Activated naive CD4-positive, alpha-beta T cell treated with anti-CD3 and anti-CD28 coated beads for 36 hours (primary cell): ENCODE measurements at regions of chr1 and their contacts with region 1.

Region 1: DNA sequence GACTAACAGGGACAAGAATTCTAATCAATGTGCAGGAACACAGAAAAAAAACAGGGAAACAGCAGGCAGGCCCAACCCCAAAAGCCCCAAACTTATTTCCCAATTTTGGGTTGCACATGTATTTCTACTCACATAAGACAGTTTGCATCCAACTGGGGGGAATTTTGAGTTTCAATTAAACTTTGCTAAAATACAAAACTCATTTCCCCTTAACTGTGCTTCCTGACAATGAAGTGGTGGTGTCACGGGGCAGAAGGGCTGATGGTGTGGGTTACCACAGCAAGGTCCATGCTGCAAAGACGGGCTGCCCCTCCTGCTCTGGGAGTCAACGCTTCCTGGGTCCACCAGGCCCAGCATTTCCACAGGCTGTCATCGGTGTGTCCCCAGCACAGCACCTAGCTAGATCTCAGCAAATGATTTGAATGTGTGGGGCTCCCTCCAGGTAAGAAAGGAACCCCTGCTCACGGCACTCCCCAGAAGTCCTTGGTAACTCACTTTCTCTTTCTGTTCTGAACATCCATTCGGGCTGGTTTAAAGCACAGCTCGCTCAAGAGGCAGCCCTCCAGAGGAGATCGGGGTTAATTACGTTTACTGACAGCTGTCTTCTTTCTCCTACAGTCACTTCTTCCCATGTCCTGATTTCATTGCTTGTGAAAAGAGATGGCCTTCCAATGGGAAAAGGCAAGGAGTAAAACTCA is 27.4 kb downstream of the HIVEP3 start:
- DNase-seq: peak; percentile 71
- H3K4me3 Mint-ChIP-seq: peak overlapping the region; percentile 69
- H3K27ac Mint-ChIP-seq: peak overlapping the region; percentile 68
- H3K4me1 Mint-ChIP-seq: peaks cover 45% of the 10 kb centered on the region
- H3K27me3 Mint-ChIP-seq: no peaks in the 10 kb centered on the region

Region 2: DNA sequence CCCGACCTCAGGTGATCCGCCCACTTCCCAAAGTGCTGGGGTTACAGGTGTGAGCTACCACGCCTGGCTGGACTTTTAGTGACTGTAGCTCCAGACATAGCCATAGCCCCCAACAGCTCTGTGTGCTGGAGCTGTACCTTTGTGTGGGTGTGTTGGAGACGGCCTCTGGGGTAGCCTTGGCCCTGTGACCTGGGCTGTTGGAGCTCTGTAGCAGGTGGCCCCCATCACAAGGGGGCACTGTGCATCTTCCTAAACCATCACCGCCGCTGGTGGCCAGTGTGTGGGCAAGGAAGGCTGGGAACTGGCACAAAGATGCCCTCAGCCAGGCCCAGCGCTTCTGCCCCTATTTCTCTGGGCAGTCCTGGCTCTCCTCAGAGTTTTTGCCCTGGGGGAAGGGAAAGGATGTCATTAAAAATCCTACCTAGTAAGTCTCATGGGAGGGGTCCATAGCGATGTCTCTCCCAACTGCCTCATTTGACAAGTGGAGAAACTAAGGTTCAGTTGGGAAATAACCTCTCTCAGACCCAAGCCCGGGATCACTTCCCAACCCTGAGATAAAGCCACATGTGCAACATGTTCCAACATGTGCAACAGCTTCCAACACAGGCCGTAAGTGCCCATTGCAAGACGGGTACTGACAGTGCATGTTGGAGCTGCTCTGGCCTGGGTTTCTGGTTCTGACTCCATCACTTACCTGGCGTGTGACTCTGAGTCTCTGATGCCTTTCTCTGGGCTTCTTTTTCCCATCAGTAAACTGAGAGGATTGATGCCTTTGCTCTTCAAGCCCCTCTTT is 568.3 kb before region 1 on chr1:
- CTCF ChIA-PET with region 1: no interaction called
- intact Hi-C with region 1: no loop called
- DNase-seq: peak; percentile 52
- H3K4me3 Mint-ChIP-seq: no peak overlapping the region
- H3K27ac Mint-ChIP-seq: no peak overlapping the region
- H3K4me1 Mint-ChIP-seq: no peaks in the 10 kb centered on the region
- H3K27me3 Mint-ChIP-seq: peaks cover 2% of the 10 kb centered on the region

Region 3: GRCh38 chr1:41573785-41574713 is 317.3 kb before region 1 on chr1:
- CTCF ChIA-PET with region 1: interaction called, 11 read pairs
- intact Hi-C with region 1: loop called (anchors 1 kb)
- DNase-seq: peak; percentile 92
- H3K4me3 Mint-ChIP-seq: no peak overlapping the region
- H3K27ac Mint-ChIP-seq: peak overlapping the region; percentile 20
- H3K4me1 Mint-ChIP-seq: peaks cover 42% of the 10 kb centered on the region
- H3K27me3 Mint-ChIP-seq: no peaks in the 10 kb centered on the region

Region 4: DNA sequence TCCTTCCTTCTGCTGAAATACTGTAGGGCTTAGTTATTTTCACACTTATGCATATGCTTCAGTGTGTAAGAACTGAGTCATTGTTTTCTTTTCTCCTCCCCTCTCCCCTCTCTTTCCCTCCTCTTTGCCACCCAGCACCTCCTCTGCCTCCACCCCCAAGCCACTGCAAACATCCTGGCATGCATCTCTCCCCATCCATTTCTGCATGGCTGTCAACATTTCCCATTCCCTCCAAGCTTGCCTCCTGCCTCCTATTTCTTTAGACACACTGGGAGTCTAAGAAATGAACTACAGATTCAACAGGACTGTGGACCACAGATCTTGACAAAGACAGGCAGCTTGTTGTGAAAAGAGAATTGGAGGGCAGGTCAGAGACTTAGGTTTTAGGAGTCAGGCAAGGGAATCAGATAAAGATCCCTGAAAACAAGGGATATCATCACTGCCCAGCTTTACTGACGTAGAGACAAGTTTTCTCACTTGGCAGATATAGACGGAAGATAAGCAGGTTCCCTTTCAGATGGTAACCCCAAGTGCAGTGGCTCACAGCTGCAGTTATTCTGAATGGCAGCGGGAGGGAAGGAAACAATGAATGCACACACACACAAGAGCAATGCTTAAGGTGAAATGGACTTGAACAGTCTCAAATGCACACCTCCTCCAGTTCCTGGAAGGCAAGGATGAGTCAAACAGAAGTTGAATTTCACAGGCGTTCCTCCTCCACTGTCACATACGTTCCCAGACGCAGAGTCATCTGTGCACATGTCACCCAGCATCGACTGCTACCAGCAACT is 28.8 kb before region 1 on chr1:
- CTCF ChIA-PET with region 1: interaction called, 9 read pairs
- intact Hi-C with region 1: loop called (anchors 1 kb)
- DNase-seq: peak; percentile 85
- H3K4me3 Mint-ChIP-seq: peak overlapping the region; percentile 41
- H3K27ac Mint-ChIP-seq: peak overlapping the region; percentile 88
- H3K4me1 Mint-ChIP-seq: peaks cover 44% of the 10 kb centered on the region
- H3K27me3 Mint-ChIP-seq: no peaks in the 10 kb centered on the region

Region 5: GRCh38 chr1:41905093-41905675 is 13.8 kb after region 1 on chr1:
- CTCF ChIA-PET with region 1: interaction called, 11 read pairs
- intact Hi-C with region 1: no loop called
- DNase-seq: no peak
- H3K4me3 Mint-ChIP-seq: no peak overlapping the region
- H3K27ac Mint-ChIP-seq: no peak overlapping the region
- H3K4me1 Mint-ChIP-seq: peaks cover 38% of the 10 kb centered on the region
- H3K27me3 Mint-ChIP-seq: no peaks in the 10 kb centered on the region

Region 6: GRCh38 chr1:41919764-41920397 is 28.5 kb after region 1 on chr1:
- CTCF ChIA-PET with region 1: interaction called, 4 read pairs
- intact Hi-C with region 1: loop called (anchors 1 kb)
- DNase-seq: peak; percentile 91
- H3K4me3 Mint-ChIP-seq: peak overlapping the region; percentile 89
- H3K27ac Mint-ChIP-seq: peak overlapping the region; percentile 91
- H3K4me1 Mint-ChIP-seq: peaks cover 49% of the 10 kb centered on the region
- H3K27me3 Mint-ChIP-seq: no peaks in the 10 kb centered on the region

Region 7: GRCh38 chr1:41936118-41936517 is 44.8 kb after region 1 on chr1:
- CTCF ChIA-PET with region 1: no interaction called
- intact Hi-C with region 1: loop called (anchors 5 kb)
- DNase-seq: peak; percentile 55
- H3K4me3 Mint-ChIP-seq: no peak overlapping the region
- H3K27ac Mint-ChIP-seq: no peak overlapping the region
- H3K4me1 Mint-ChIP-seq: peaks cover 40% of the 10 kb centered on the region
- H3K27me3 Mint-ChIP-seq: no peaks in the 10 kb centered on the region